ENCODE measurements at regions of chr11 and their contacts with region 1.

Region 1: DNA sequence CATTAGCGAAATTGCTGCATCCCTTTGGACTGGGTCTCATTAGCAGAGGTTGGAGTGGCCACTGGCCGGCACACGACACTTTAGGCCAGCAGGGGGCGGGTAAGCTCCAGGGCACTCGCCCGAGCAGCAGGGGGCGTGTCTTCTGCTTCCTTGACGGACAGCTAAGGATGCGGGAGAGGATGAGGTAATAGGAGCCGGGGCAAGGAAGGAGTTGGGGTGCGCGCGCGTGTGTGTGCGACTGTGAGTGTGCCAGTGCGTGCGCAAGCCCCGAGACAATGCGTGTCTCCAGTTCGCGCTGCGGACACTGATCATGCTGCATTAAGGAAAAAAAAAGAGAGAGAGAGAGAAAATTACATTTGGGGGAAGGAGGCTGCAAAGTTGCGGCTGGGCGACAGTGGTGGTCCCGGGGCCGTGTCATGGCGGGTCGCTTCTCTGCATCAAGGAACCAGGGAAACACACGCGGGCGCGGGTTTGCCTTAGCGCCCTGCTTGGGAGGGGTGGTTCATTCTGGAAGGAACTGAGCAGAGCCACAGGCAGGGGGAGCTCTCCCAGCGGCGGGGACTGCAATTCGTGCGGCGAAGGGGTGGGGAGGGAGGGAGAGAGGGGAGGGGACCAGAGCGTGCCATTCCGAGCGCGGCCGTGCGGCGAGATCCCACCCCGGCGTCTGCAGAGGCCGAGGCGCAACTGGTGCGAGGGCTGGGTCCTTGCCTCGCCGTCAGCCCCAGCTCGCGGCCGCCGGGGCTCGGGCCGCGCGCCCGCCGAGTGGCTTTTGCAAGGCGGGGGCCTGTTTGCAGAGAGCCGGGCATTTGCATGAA is at the start of gene DTX4:
- DNase-seq: peak; percentile 93
- ATAC-seq: peak; percentile 80
- H3K4me3 ChIP-seq: peak within 1 kb of the TSS; percentile 55 to 76 (median 74)
- H3K4me3 Mint-ChIP-seq: peak within 1 kb of the TSS; percentile 98
- H3K27ac ChIP-seq: peak within 1 kb of the TSS; percentile 38 to 60
- H3K27ac Mint-ChIP-seq: peak within 1 kb of the TSS; percentile 92
- H3K4me1 ChIP-seq: peaks cover 20 to 26% of the 10 kb centered on the region in 2 donors
- H3K4me1 Mint-ChIP-seq: peaks cover 28% of the 10 kb centered on the region
- H3K27me3 ChIP-seq: no peaks in the 10 kb centered on the region
- H3K27me3 Mint-ChIP-seq: no peaks in the 10 kb centered on the region
- CTCF ChIP-seq: peak; percentile 96
- total RNA-seq, gene DTX4: 41.0 and 43.3 TPM in 2 replicates

Region 2: DNA sequence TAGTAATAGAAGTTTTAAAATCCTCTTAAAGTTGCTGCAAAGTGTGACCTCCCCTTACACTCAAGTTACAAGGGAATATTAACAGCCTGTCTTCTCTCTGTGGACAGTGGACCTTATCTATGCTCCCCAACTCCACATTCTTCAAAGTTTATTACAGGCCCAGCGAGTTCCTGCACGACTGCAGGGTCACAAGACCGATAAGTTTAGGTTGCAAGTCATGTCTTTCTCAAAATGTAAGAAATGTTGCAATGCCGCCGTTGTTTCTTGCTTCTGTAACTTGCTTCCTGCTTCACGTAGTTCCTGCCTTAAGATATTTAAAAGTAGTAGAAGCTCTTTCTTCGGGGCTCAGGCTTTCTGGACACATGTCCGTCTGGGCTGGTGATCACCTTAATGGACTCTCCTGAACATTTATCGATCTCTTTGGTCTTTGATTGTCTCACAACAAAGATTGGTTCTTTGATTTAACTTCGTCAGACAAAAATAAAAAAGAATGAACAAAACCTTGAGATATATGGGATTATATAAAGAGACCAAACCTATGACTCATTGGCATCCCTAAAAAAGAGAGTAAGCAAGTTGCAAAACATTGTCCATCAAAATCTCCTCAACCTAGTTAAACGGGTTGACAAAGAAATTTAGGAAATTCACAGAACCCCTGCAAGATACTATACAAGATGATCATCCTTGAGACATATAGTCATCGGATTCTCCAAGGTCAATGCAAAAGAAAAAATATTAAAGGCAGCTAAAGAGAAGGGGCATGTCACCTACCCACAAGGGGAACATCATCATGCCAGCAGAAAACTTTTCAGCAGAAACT is 394.6 kb before region 1 on chr11:
- CTCF ChIA-PET with region 1: no interaction called
- POLR2A ChIA-PET with region 1: no interaction called
- intact Hi-C with region 1: no loop called
- DNase-seq: no peak
- ATAC-seq: no peak
- H3K4me3 ChIP-seq: no peak overlapping the region
- H3K4me3 Mint-ChIP-seq: no peak overlapping the region
- H3K27ac ChIP-seq: no peak overlapping the region
- H3K27ac Mint-ChIP-seq: no peak overlapping the region
- H3K4me1 ChIP-seq: no peaks in the 10 kb centered on the region
- H3K4me1 Mint-ChIP-seq: no peaks in the 10 kb centered on the region
- H3K27me3 ChIP-seq: no peaks in the 10 kb centered on the region
- H3K27me3 Mint-ChIP-seq: peaks cover 14% of the 10 kb centered on the region
- CTCF ChIP-seq: no peak

Region 3: GRCh38 chr11:58905721-58906477 is 265.8 kb before region 1 on chr11:
- CTCF ChIA-PET with region 1: no interaction called
- POLR2A ChIA-PET with region 1: no interaction called
- intact Hi-C with region 1: no loop called
- DNase-seq: peak; percentile 18
- ATAC-seq: no peak
- H3K4me3 ChIP-seq: no peak overlapping the region
- H3K4me3 Mint-ChIP-seq: peak overlapping the region; percentile 6
- H3K27ac ChIP-seq: no peak overlapping the region
- H3K27ac Mint-ChIP-seq: no peak overlapping the region
- H3K4me1 ChIP-seq: peaks cover 17 to 21% of the 10 kb centered on the region in 2 donors
- H3K4me1 Mint-ChIP-seq: peaks cover 26% of the 10 kb centered on the region
- H3K27me3 ChIP-seq: peaks cover 0 to 55% (median 40%) of the 10 kb centered on the region in 4 experiments
- H3K27me3 Mint-ChIP-seq: peaks cover 73% of the 10 kb centered on the region
- CTCF ChIP-seq: no peak

Region 4: DNA sequence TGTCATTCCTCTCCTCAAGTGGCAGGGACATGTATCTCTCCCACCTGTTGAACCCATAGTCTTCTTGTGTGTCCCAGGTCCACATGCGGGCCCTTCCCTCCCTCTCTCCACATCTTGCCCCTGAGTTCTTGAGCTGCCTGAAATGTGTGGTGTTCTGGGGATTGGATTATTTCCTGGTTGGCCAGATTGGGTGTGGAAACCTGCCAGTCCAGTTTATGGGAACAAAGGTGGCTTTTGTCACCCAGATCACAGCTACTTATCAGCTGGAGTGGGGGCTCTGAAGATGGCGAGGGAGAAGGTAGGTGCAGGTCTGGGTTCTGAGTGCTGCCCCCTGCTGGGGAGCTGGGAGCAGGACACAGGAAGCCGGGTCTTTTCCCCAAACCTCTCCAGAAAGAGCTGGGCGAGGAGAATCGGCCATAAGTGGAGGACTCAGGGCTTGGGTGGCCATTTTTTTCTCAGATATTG is 14.4 kb after region 1 on chr11:
- CTCF ChIA-PET with region 1: interaction called, 215 read pairs
- POLR2A ChIA-PET with region 1: interaction called, 12 read pairs
- intact Hi-C with region 1: loop called (anchors 1 kb)
- DNase-seq: peak; percentile 68
- ATAC-seq: peak; percentile 59
- H3K4me3 ChIP-seq: no peak overlapping the region
- H3K4me3 Mint-ChIP-seq: no peak overlapping the region
- H3K27ac ChIP-seq: no peak overlapping the region
- H3K27ac Mint-ChIP-seq: no peak overlapping the region
- H3K4me1 ChIP-seq: peaks cover 0 to 2% of the 10 kb centered on the region in 2 donors
- H3K4me1 Mint-ChIP-seq: peaks cover 20% of the 10 kb centered on the region
- H3K27me3 ChIP-seq: no peaks in the 10 kb centered on the region
- H3K27me3 Mint-ChIP-seq: no peaks in the 10 kb centered on the region
- CTCF ChIP-seq: peak; percentile 69

Region 5: GRCh38 chr11:59216641-59217564 is 45.2 kb after region 1 on chr11:
- CTCF ChIA-PET with region 1: interaction called, 57 read pairs
- POLR2A ChIA-PET with region 1: interaction called, 20 read pairs
- intact Hi-C with region 1: no loop called
- DNase-seq: peak; percentile 95
- ATAC-seq: peak; percentile 72
- H3K4me3 ChIP-seq: peak overlapping the region in 4 of 5 experiments; percentile 12 to 46 (median 16)
- H3K4me3 Mint-ChIP-seq: peak overlapping the region; percentile 78
- H3K27ac ChIP-seq: peak overlapping the region; percentile 82 to 94
- H3K27ac Mint-ChIP-seq: peak overlapping the region; percentile 95
- H3K4me1 ChIP-seq: peaks cover 93 to 94% of the 10 kb centered on the region in 2 donors
- H3K4me1 Mint-ChIP-seq: peaks cover 96% of the 10 kb centered on the region
- H3K27me3 ChIP-seq: no peaks in the 10 kb centered on the region
- H3K27me3 Mint-ChIP-seq: no peaks in the 10 kb centered on the region
- CTCF ChIP-seq: no peak

Region 6: DNA sequence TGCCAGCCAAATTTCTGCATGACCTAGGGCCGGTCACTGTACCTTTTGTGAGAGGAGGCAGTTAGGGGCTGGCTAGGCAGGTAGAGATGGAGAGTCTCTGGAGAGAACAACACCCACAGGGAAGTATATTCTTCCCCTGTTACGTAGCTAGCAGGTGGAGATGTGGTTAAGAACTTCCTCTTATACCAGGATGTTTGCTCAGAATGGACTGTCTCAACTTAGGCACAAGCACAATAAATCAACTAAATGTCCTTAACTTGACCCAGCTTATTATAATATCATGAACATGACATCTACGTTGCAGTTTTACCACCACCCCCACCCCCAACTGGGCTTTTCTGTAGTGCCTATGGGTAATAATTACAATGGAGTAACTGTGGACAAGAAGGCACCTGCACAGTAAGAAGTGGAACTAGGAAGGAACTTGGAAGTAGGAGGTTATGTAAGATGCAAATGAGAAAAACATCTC is 101.7 kb after region 1 on chr11:
- CTCF ChIA-PET with region 1: interaction called, 26 read pairs
- POLR2A ChIA-PET with region 1: interaction called, 6 read pairs
- intact Hi-C with region 1: no loop called
- DNase-seq: peak; percentile 88
- ATAC-seq: peak; percentile 85
- H3K4me3 ChIP-seq: peak overlapping the region in 1 of 5 experiments; percentile 44
- H3K4me3 Mint-ChIP-seq: peak overlapping the region; percentile 83
- H3K27ac ChIP-seq: peak overlapping the region; percentile 90 to 94
- H3K27ac Mint-ChIP-seq: peak overlapping the region; percentile 95
- H3K4me1 ChIP-seq: peaks cover 76 to 85% of the 10 kb centered on the region in 2 donors
- H3K4me1 Mint-ChIP-seq: peaks cover 92% of the 10 kb centered on the region
- H3K27me3 ChIP-seq: no peaks in the 10 kb centered on the region
- H3K27me3 Mint-ChIP-seq: no peaks in the 10 kb centered on the region
- CTCF ChIP-seq: no peak

Region 7: GRCh38 chr11:59380263-59381059 is 208.7 kb after region 1 on chr11:
- CTCF ChIA-PET with region 1: interaction called, 12 read pairs
- POLR2A ChIA-PET with region 1: no interaction called
- intact Hi-C with region 1: no loop called
- DNase-seq: peak; percentile 55
- ATAC-seq: peak; percentile 57
- H3K4me3 ChIP-seq: peak overlapping the region in 3 of 5 experiments; percentile 24 to 58 (median 31)
- H3K4me3 Mint-ChIP-seq: peak overlapping the region; percentile 18
- H3K27ac ChIP-seq: peak overlapping the region in 1 of 2 donors; percentile 42
- H3K27ac Mint-ChIP-seq: peak overlapping the region; percentile 32
- H3K4me1 ChIP-seq: peaks cover 6 to 15% of the 10 kb centered on the region in 2 donors
- H3K4me1 Mint-ChIP-seq: peaks cover 17% of the 10 kb centered on the region
- H3K27me3 ChIP-seq: no peaks in the 10 kb centered on the region
- H3K27me3 Mint-ChIP-seq: no peaks in the 10 kb centered on the region
- CTCF ChIP-seq: no peak

Region 8: GRCh38 chr11:59560702-59561469 is 389.2 kb after region 1 on chr11:
- CTCF ChIA-PET with region 1: no interaction called
- POLR2A ChIA-PET with region 1: no interaction called
- intact Hi-C with region 1: loop called (anchors 5 kb)
- DNase-seq: peak; percentile 92
- ATAC-seq: peak; percentile 79
- H3K4me3 ChIP-seq: peak overlapping the region; percentile 84 to 98 (median 92)
- H3K4me3 Mint-ChIP-seq: peak overlapping the region; percentile 95
- H3K27ac ChIP-seq: peak overlapping the region; percentile 72 to 84
- H3K27ac Mint-ChIP-seq: peak overlapping the region; percentile 98
- H3K4me1 ChIP-seq: peaks cover 22 to 49% of the 10 kb centered on the region in 2 donors
- H3K4me1 Mint-ChIP-seq: peaks cover 44% of the 10 kb centered on the region
- H3K27me3 ChIP-seq: peaks cover 0 to 3% (median 1%) of the 10 kb centered on the region in 4 experiments
- H3K27me3 Mint-ChIP-seq: no peaks in the 10 kb centered on the region
- CTCF ChIP-seq: no peak

Measured in B cell (primary cell).